PC-9 (cell line): ENCODE measurements at regions of chr1 and their contacts with region 1.

Region 1: GRCh38 chr1:116737020-116737854 is 17.0 kb upstream of the CD2 start:
- DNase-seq: peak in 1 of 2 experiments; percentile 45
- H3K4me3 ChIP-seq: no peak overlapping the region
- H3K27ac ChIP-seq: no peak overlapping the region
- H3K4me1 ChIP-seq: no peaks in the 10 kb centered on the region
- H3K27me3 ChIP-seq: no peaks in the 10 kb centered on the region
- CTCF ChIP-seq: peak; percentile 95

Region 2: DNA sequence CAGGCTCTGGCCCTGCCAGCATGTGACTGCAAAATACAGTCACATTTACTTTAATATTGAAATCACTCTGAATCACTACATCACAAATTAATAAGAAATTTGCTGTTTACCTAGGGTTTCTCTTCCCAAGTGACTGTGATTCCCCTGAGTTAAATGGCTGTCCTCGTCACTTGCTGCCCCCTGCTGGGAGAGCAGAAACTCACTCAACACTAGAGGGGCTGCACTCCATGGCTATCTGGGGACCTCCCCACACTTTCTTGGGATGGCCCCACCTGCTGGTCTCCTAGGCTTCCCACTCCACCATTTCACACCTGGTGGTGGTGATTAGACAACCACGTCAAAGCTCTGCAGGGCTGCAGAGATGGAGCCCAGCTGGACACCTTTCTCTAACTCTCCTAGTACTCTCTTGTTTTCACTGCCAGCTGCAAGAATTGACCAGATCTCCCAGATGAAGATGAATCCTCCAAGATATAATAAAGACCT is 80.4 kb after region 1 on chr1:
- CTCF ChIA-PET with region 1: no interaction called
- POLR2A ChIA-PET with region 1: no interaction called
- intact Hi-C with region 1: loop called (anchors 10 kb)
- DNase-seq: peak; percentile 52 to 76
- H3K4me3 ChIP-seq: no peak overlapping the region
- H3K27ac ChIP-seq: no peak overlapping the region
- H3K4me1 ChIP-seq: no peaks in the 10 kb centered on the region
- H3K27me3 ChIP-seq: no peaks in the 10 kb centered on the region
- CTCF ChIP-seq: peak; percentile 94

Region 3: GRCh38 chr1:116878804-116879477 is 141.7 kb after region 1 on chr1:
- CTCF ChIA-PET with region 1: interaction called, 4 read pairs
- POLR2A ChIA-PET with region 1: no interaction called
- intact Hi-C with region 1: loop called (anchors 5 kb)
- DNase-seq: peak; percentile 33 to 69
- H3K4me3 ChIP-seq: peak overlapping the region; percentile 45; the same call in 1 of the 2 replicates
- H3K27ac ChIP-seq: no peak overlapping the region
- H3K4me1 ChIP-seq: peaks cover 21% of the 10 kb centered on the region
- H3K27me3 ChIP-seq: no peaks in the 10 kb centered on the region
- CTCF ChIP-seq: no peak

Region 4: DNA sequence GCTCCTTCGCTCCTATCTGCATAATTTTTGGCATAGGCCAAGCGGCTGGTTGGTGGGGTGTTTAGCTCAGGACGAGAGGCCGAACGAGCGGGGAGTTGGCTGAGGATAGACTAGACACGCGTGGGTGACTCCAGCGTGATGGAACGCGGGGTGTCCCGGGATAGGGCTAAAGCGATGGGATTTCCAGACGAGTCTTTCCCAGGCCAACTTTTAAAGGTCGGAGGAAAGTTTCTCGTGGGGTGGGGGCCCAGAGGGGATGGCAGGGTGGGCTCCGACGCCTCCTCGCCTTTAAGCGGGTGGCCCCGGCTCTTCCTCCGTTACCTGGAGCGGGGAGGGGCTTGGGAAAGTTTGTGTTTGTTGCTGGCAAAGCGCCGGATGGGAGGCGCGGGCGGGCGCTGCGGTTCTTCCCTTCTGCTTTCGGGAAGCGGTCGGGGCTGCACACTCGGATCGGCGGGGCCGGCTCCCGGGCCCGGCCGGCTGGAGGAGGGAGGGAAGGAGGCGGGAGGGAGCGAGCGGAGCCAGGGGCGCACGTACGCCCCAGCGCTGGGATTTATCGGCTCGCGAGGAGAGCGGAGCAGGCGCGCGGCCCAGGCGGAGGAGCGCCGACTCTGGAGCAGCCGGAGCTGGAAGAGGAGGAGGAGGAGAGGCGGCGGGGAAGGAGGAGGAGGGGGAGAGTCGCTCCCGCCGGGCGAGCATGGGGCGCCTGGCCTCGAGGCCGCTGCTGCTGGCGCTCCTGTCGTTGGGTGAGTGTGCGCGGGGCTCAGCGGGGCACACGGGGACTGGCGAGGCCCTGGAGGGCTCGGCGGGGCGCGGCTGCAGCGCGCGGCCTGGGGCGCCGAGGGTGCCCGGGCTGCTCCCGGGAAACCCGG is 172.5 kb after region 1 on chr1 and contains the start of gene PTGFRN:
- CTCF ChIA-PET with region 1: no interaction called
- POLR2A ChIA-PET with region 1: no interaction called
- intact Hi-C with region 1: loop called (anchors 5 kb)
- DNase-seq: peak; percentile 53 to 68
- H3K4me3 ChIP-seq: peak within 1 kb of the TSS; percentile 77
- H3K27ac ChIP-seq: peak within 1 kb of the TSS; percentile 21
- H3K4me1 ChIP-seq: peaks cover 56% of the 10 kb centered on the region
- H3K27me3 ChIP-seq: no peaks in the 10 kb centered on the region
- CTCF ChIP-seq: no peak
- total RNA-seq, gene PTGFRN: 83.7 and 87.3 TPM in 2 replicates

Region 5: DNA sequence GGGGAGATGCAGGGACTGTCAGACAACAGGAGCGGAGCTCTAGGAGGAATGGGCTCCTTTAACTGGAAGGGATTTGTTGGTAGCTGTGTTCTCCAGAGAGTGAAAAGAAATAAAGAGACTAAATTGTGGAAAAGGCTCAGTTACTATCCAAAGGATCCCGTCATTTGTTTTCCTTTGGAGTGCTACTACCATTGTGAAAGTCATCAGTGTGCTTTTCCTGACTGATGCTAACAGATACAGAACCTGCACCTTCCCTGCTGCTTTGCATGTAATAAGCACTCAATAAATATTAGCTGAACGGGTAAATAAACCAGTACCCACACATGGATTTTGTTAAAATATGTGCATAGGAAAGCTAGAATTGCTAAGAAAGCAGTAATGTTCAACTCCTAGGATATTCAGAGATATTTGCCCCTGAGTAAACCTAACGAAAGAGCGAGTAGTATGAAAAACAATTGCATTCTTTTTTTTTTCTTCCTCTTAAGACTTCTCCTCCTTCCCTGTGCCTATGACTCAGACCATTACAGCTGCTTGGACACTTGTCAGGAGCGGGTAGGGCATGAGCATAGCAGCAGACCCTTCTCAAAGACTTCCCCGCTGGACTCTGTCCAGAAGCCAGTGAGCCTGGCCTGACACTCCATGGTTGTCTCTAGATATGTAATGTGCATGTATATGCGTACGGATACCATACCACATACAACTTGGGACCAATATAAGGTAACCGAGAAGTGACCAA is 214.1 kb after region 1 on chr1:
- CTCF ChIA-PET with region 1: no interaction called
- POLR2A ChIA-PET with region 1: no interaction called
- intact Hi-C with region 1: loop called (anchors 10 kb)
- DNase-seq: no peak
- H3K4me3 ChIP-seq: no peak overlapping the region
- H3K27ac ChIP-seq: no peak overlapping the region
- H3K4me1 ChIP-seq: no peaks in the 10 kb centered on the region
- H3K27me3 ChIP-seq: no peaks in the 10 kb centered on the region
- CTCF ChIP-seq: no peak

Region 6: DNA sequence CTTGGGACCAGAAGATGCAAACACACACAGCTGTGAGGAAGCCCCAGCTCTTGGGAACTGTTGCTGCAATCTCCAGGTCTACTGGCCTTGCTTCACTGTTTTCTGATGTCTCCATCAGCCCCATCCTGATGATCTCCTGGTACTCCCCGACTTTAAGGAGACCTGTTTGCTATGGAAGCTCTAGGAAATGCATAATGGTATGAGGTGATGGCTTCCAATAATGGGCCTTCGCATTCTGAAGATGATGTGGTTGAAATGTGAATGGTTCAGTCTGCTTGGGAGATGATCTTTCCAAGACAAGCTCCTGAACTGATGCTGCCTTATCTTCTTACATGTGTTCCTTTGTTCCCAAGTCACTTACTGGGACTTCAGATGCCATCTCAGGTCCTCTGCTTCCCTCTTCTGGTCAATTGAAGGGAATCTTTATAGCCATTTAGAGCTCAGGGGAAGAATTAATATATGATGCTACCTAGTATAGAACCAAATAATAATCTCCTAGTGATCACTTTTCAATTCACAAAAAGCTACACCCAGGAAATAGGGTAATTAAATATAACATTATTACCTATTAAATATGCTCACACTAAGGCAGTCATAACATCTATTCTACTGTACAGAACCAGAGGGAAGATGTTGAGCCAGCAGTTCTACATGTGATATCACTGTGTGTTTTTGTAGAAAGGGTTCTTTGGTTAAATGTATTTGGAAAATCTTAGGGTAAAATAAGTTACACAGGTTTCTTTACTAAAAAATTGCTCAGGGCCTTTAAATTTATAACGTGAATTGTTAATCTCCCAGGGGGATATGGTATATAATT is 547.4 kb after region 1 on chr1:
- CTCF ChIA-PET with region 1: no interaction called
- POLR2A ChIA-PET with region 1: no interaction called
- intact Hi-C with region 1: loop called (anchors 5 kb)
- DNase-seq: peak; percentile 39 to 81
- H3K4me3 ChIP-seq: no peak overlapping the region
- H3K27ac ChIP-seq: no peak overlapping the region
- H3K4me1 ChIP-seq: peaks cover 10% of the 10 kb centered on the region
- H3K27me3 ChIP-seq: no peaks in the 10 kb centered on the region
- CTCF ChIP-seq: peak; percentile 98